ENCODE measurements at regions of chr2 and their contacts with region 1.

Region 1: GRCh38 chr2:67965246-67965645 is 97.6 kb downstream of the C1D start:
- DNase-seq: peak; percentile 57
- H3K4me3 Mint-ChIP-seq: no peak overlapping the region
- H3K27ac Mint-ChIP-seq: peak overlapping the region; percentile 82
- H3K4me1 Mint-ChIP-seq: peaks cover 11% of the 10 kb centered on the region
- H3K27me3 Mint-ChIP-seq: no peaks in the 10 kb centered on the region
- CTCF ChIP-seq: no peak

Region 2: GRCh38 chr2:67917332-67918054 is 47.8 kb before region 1 on chr2:
- CTCF ChIA-PET with region 1: no interaction called
- POLR2A ChIA-PET with region 1: interaction called, 10 read pairs
- intact Hi-C with region 1: no loop called
- DNase-seq: peak; percentile 81
- H3K4me3 Mint-ChIP-seq: peak overlapping the region; percentile 2
- H3K27ac Mint-ChIP-seq: peak overlapping the region; percentile 81
- H3K4me1 Mint-ChIP-seq: peaks cover 16% of the 10 kb centered on the region
- H3K27me3 Mint-ChIP-seq: no peaks in the 10 kb centered on the region
- CTCF ChIP-seq: no peak

Region 3: DNA sequence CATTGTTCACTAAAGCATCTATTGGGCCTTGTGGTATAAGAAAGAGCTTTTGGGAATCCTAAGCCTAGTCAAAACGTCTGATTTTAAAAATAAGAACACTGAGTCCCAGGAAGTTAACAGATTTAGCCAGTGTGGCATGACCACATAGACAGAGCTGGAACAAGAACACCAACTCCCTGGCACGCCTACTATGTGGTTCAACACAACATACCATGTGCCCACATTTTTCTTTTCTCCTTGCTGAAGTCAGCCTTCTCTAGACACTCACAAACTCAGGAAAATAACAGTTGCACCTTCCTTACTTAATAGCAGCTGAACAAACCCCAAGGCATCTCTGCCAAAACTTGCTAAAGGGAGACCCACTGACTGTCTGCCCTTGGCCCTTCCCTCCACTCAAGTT is 27.2 kb before region 1 on chr2:
- CTCF ChIA-PET with region 1: interaction called, 3 read pairs
- POLR2A ChIA-PET with region 1: interaction called, 14 read pairs
- intact Hi-C with region 1: no loop called
- DNase-seq: peak; percentile 11
- H3K4me3 Mint-ChIP-seq: no peak overlapping the region
- H3K27ac Mint-ChIP-seq: peak overlapping the region; percentile 96
- H3K4me1 Mint-ChIP-seq: peaks cover 21% of the 10 kb centered on the region
- H3K27me3 Mint-ChIP-seq: no peaks in the 10 kb centered on the region
- CTCF ChIP-seq: no peak

Region 4: GRCh38 chr2:67948506-67948905 is 16.7 kb before region 1 on chr2:
- CTCF ChIA-PET with region 1: interaction called, 5 read pairs
- POLR2A ChIA-PET with region 1: interaction called, 95 read pairs
- intact Hi-C with region 1: no loop called
- DNase-seq: no peak
- H3K4me3 Mint-ChIP-seq: no peak overlapping the region
- H3K27ac Mint-ChIP-seq: no peak overlapping the region
- H3K4me1 Mint-ChIP-seq: peaks cover 14% of the 10 kb centered on the region
- H3K27me3 Mint-ChIP-seq: no peaks in the 10 kb centered on the region
- CTCF ChIP-seq: no peak

Region 5: DNA sequence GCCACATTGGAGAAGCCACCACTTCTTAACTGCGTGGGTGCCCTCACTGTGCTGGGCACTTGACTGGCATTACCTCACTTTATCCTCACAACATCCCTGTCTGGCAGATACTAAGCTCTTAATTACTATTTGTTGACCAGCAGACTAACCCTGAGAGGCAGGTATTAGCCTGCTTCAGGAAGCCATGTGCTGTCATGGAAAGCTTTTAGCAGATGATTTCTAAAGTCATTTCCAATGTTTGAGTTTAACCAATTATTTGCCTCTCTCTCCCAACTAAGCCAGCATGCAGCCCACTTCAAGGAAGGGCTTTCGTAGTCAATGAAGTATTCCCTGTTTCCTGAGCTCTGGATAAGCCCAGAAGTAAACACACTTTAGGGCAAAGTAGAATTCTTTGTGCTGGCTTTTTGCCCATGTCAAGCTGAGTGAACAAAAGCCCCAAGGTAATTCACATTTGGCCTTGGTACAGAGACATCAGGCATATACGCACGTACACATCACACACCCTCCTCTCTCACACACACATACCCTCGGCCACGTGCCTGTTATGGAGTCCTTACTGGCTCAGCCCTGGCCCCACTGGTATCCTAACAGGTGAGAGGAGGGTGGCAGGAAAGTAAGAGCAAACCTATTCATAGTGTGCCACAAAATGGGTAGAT is 11.0 kb before region 1 on chr2:
- CTCF ChIA-PET with region 1: interaction called, 3 read pairs
- POLR2A ChIA-PET with region 1: interaction called, 95 read pairs
- intact Hi-C with region 1: no loop called
- DNase-seq: peak; percentile 64
- H3K4me3 Mint-ChIP-seq: no peak overlapping the region
- H3K27ac Mint-ChIP-seq: no peak overlapping the region
- H3K4me1 Mint-ChIP-seq: peaks cover 17% of the 10 kb centered on the region
- H3K27me3 Mint-ChIP-seq: no peaks in the 10 kb centered on the region
- CTCF ChIP-seq: no peak

Region 6: GRCh38 chr2:67997528-67997900 is 32.3 kb after region 1 on chr2:
- CTCF ChIA-PET with region 1: no interaction called
- POLR2A ChIA-PET with region 1: interaction called, 12 read pairs
- intact Hi-C with region 1: no loop called
- DNase-seq: peak; percentile 66
- H3K4me3 Mint-ChIP-seq: peak overlapping the region; percentile 54
- H3K27ac Mint-ChIP-seq: peak overlapping the region; percentile 56
- H3K4me1 Mint-ChIP-seq: peaks cover 16% of the 10 kb centered on the region
- H3K27me3 Mint-ChIP-seq: no peaks in the 10 kb centered on the region
- CTCF ChIP-seq: no peak

Region 7: GRCh38 chr2:68059784-68060525 is 94.7 kb after region 1 on chr2:
- CTCF ChIA-PET with region 1: no interaction called
- POLR2A ChIA-PET with region 1: no interaction called
- intact Hi-C with region 1: no loop called
- DNase-seq: no peak
- H3K4me3 Mint-ChIP-seq: peak overlapping the region; percentile 21
- H3K27ac Mint-ChIP-seq: no peak overlapping the region
- H3K4me1 Mint-ChIP-seq: peaks cover 26% of the 10 kb centered on the region
- H3K27me3 Mint-ChIP-seq: no peaks in the 10 kb centered on the region
- CTCF ChIP-seq: no peak

Region 8: DNA sequence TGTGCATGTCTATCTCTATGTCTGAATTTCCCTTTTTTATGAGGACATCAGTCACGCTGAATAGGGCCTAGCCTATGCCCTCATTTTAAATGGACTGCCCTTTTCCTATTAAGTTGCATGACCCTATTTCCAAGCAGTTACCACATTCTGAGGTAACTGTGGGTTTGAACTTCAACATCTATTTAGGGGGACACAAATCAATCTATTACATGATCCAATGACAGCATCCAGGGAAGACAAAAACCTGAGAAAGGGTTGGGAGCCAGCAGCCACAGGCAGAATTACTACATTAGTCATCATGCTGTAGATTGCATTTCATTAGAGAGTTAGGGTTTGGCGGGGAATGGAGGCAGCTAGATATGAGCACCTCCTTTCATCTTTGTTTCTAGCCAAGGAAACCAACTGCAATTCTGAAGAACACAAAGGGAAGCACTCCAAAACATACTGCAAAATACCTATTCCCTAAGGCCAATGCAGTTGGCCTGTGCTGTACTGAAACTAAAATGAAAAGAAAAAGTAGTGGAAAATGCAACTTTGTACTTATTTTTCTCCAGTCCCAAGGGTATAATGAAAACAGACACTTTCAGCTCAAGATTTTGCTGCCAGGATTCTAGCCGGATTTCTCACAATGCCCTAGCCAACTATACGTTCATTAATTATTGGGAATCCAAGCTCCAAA is 137.9 kb after region 1 on chr2:
- CTCF ChIA-PET with region 1: no interaction called
- POLR2A ChIA-PET with region 1: no interaction called
- intact Hi-C with region 1: no loop called
- DNase-seq: no peak
- H3K4me3 Mint-ChIP-seq: no peak overlapping the region
- H3K27ac Mint-ChIP-seq: no peak overlapping the region
- H3K4me1 Mint-ChIP-seq: no peaks in the 10 kb centered on the region
- H3K27me3 Mint-ChIP-seq: no peaks in the 10 kb centered on the region
- CTCF ChIP-seq: no peak

Region 9: DNA sequence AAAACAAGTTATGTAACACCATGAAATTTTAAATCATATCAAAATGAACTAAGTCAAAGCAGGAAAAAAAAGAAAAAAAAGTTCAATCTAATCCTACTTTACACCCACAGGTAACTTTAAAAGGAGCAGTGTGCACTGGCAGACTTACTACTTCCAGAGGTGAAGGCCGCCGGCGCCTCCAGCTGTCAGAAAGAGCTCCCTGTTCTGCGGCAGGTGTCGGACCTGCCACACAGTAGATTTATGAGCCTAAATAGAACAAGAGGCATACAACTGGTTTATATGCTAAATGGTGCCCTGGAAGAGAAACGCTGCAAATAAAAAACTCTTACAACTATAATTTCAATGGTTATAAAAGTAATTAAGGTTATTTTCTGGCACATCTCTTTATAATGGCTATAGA is 169.3 kb after region 1 on chr2:
- CTCF ChIA-PET with region 1: no interaction called
- POLR2A ChIA-PET with region 1: no interaction called
- intact Hi-C with region 1: no loop called
- DNase-seq: no peak
- H3K4me3 Mint-ChIP-seq: no peak overlapping the region
- H3K27ac Mint-ChIP-seq: no peak overlapping the region
- H3K4me1 Mint-ChIP-seq: no peaks in the 10 kb centered on the region
- H3K27me3 Mint-ChIP-seq: no peaks in the 10 kb centered on the region
- CTCF ChIP-seq: no peak